ENCODE measurements at regions of chr10 and their contacts with region 1.

Region 1: GRCh38 chr10:47165711-47166524 is 134.1 kb upstream of the GDF10 start:
- DNase-seq: peak; percentile 27
- ATAC-seq: peak; percentile 72
- H3K4me3 Mint-ChIP-seq: peak overlapping the region; percentile 85
- H3K27ac Mint-ChIP-seq: peak overlapping the region; percentile 53
- H3K4me1 Mint-ChIP-seq: peaks cover 18% of the 10 kb centered on the region
- H3K27me3 Mint-ChIP-seq: peaks cover 10% of the 10 kb centered on the region
- CTCF ChIP-seq: no peak

Region 2: GRCh38 chr10:46216836-46217751 is 948.8 kb before region 1 on chr10:
- CTCF ChIA-PET with region 1: no interaction called
- POLR2A ChIA-PET with region 1: no interaction called
- intact Hi-C with region 1: no loop called
- DNase-seq: no peak
- ATAC-seq: no peak
- H3K4me3 Mint-ChIP-seq: no peak overlapping the region
- H3K27ac Mint-ChIP-seq: no peak overlapping the region
- H3K4me1 Mint-ChIP-seq: no peaks in the 10 kb centered on the region
- H3K27me3 Mint-ChIP-seq: peaks cover 1% of the 10 kb centered on the region
- CTCF ChIP-seq: no peak

Region 3: GRCh38 chr10:47076949-47077361 is 89.0 kb before region 1 on chr10:
- CTCF ChIA-PET with region 1: no interaction called
- POLR2A ChIA-PET with region 1: no interaction called
- intact Hi-C with region 1: no loop called
- DNase-seq: no peak
- ATAC-seq: no peak
- H3K4me3 Mint-ChIP-seq: no peak overlapping the region
- H3K27ac Mint-ChIP-seq: no peak overlapping the region
- H3K4me1 Mint-ChIP-seq: no peaks in the 10 kb centered on the region
- H3K27me3 Mint-ChIP-seq: peaks cover 27% of the 10 kb centered on the region
- CTCF ChIP-seq: no peak

Region 4: GRCh38 chr10:47152861-47153349 is 13.0 kb before region 1 on chr10:
- CTCF ChIA-PET with region 1: no interaction called
- POLR2A ChIA-PET with region 1: no interaction called
- intact Hi-C with region 1: no loop called
- DNase-seq: no peak
- ATAC-seq: no peak
- H3K4me3 Mint-ChIP-seq: no peak overlapping the region
- H3K27ac Mint-ChIP-seq: no peak overlapping the region
- H3K4me1 Mint-ChIP-seq: no peaks in the 10 kb centered on the region
- H3K27me3 Mint-ChIP-seq: peaks cover 16% of the 10 kb centered on the region
- CTCF ChIP-seq: no peak

Region 5: DNA sequence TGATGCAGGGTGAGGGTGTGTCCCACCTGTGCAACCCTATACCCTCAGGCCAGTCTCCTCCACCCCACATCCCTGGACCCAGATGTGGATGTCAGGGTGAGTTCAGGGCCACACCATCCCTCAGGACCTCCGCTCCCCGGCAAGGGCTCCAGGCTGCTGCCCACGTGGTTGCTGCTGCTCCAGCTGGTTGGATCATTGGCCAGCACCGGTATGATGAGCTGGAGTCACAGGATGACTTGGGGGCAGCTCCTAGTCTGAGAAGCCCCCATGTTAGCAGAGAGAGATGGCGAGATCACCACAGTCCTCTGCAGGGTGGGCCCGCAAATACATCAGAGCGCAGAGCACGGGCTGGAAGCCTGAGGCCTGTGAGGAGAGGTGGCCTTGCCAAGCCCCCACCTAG is 30.8 kb after region 1 on chr10:
- CTCF ChIA-PET with region 1: no interaction called
- POLR2A ChIA-PET with region 1: no interaction called
- intact Hi-C with region 1: loop called (anchors 2 kb)
- DNase-seq: no peak
- ATAC-seq: no peak
- H3K4me3 Mint-ChIP-seq: no peak overlapping the region
- H3K27ac Mint-ChIP-seq: no peak overlapping the region
- H3K4me1 Mint-ChIP-seq: no peaks in the 10 kb centered on the region
- H3K27me3 Mint-ChIP-seq: no peaks in the 10 kb centered on the region
- CTCF ChIP-seq: no peak

Region 6: GRCh38 chr10:47261121-47261520 is 95.2 kb after region 1 on chr10:
- CTCF ChIA-PET with region 1: no interaction called
- POLR2A ChIA-PET with region 1: no interaction called
- intact Hi-C with region 1: loop called (anchors 5 kb)
- DNase-seq: no peak
- ATAC-seq: peak; percentile 93
- H3K4me3 Mint-ChIP-seq: peak overlapping the region; percentile 60
- H3K27ac Mint-ChIP-seq: peak overlapping the region; percentile 94
- H3K4me1 Mint-ChIP-seq: peaks cover 57% of the 10 kb centered on the region
- H3K27me3 Mint-ChIP-seq: no peaks in the 10 kb centered on the region
- CTCF ChIP-seq: no peak